CD4-positive, alpha-beta memory T cell (primary cell): ENCODE measurements at regions of chr12 and their contacts with region 1.

Region 1: GRCh38 chr12:48851883-48852733 is at the start of gene DDX23:
- DNase-seq: peak; percentile 89 to 96 (median 92)
- H3K4me3 ChIP-seq: peak within 1 kb of the TSS; percentile 39 to 95
- H3K4me3 Mint-ChIP-seq: peak within 1 kb of the TSS; percentile 91 to 100 (median 98)
- H3K27ac ChIP-seq: peak within 1 kb of the TSS; percentile 91
- H3K27ac Mint-ChIP-seq: peak within 1 kb of the TSS; percentile 92 to 99 (median 99)
- H3K4me1 ChIP-seq: peaks cover 32% of the 10 kb centered on the region
- H3K4me1 Mint-ChIP-seq: peaks cover 28 to 49% (median 40%) of the 10 kb centered on the region in 4 donors
- H3K27me3 ChIP-seq: no peaks in the 10 kb centered on the region
- H3K27me3 Mint-ChIP-seq: no peaks in the 10 kb centered on the region
- total RNA-seq, gene DDX23: 154 to 158 TPM

Region 2: DNA sequence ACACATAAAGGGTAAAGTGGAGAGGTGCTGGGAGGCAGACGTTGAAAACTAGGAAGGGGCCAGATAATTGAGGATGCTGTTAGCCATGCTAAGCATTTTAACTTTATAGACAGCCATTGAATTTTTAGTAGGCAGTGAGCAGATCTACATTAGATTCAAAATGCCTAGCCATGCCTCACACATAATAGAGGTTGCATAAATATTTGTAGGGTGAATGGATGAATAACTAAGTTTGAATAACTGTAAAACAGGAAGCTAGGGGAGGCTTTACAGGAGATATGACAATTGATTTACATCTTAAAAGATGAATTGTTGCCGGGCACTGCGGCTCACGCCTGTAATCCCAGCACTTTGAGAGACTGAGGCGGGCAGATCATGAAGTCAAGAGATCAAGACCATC is 123.3 kb before region 1 on chr12:
- CTCF ChIA-PET with region 1: no interaction called
- POLR2A ChIA-PET with region 1: no interaction called
- intact Hi-C with region 1: no loop called
- DNase-seq: no peak
- H3K4me3 ChIP-seq: no peak overlapping the region
- H3K4me3 Mint-ChIP-seq: no peak overlapping the region
- H3K27ac ChIP-seq: no peak overlapping the region
- H3K27ac Mint-ChIP-seq: no peak overlapping the region
- H3K4me1 ChIP-seq: no peaks in the 10 kb centered on the region
- H3K4me1 Mint-ChIP-seq: no peaks in the 10 kb centered on the region
- H3K27me3 ChIP-seq: no peaks in the 10 kb centered on the region
- H3K27me3 Mint-ChIP-seq: peaks cover 1 to 6% of the 10 kb centered on the region in 2 donors

Region 3: GRCh38 chr12:48838048-48838447 is 14.1 kb before region 1 on chr12:
- CTCF ChIA-PET with region 1: interaction called, 10 read pairs
- POLR2A ChIA-PET with region 1: interaction called, 6 read pairs
- intact Hi-C with region 1: no loop called
- DNase-seq: no peak
- H3K4me3 ChIP-seq: no peak overlapping the region
- H3K4me3 Mint-ChIP-seq: no peak overlapping the region
- H3K27ac ChIP-seq: no peak overlapping the region
- H3K27ac Mint-ChIP-seq: peak overlapping the region in 2 of 7 donors; percentile 21 to 54
- H3K4me1 ChIP-seq: no peaks in the 10 kb centered on the region
- H3K4me1 Mint-ChIP-seq: peaks cover 0 to 2% (median under 1%) of the 10 kb centered on the region in 4 donors
- H3K27me3 ChIP-seq: no peaks in the 10 kb centered on the region
- H3K27me3 Mint-ChIP-seq: no peaks in the 10 kb centered on the region

Region 4: GRCh38 chr12:48903982-48904411 is 51.9 kb after region 1 on chr12:
- CTCF ChIA-PET with region 1: interaction called, 69 read pairs
- POLR2A ChIA-PET with region 1: interaction called, 11 read pairs
- intact Hi-C with region 1: no loop called
- DNase-seq: peak; percentile 81 to 89 (median 82)
- H3K4me3 ChIP-seq: peak overlapping the region in 1 of 2 donors; percentile 36
- H3K4me3 Mint-ChIP-seq: peak overlapping the region; percentile 68 to 86 (median 82)
- H3K27ac ChIP-seq: no peak overlapping the region
- H3K27ac Mint-ChIP-seq: peak overlapping the region in 6 of 7 donors; percentile 76 to 92 (median 89)
- H3K4me1 ChIP-seq: peaks cover 6% of the 10 kb centered on the region
- H3K4me1 Mint-ChIP-seq: peaks cover 2 to 13% (median 7%) of the 10 kb centered on the region in 4 donors
- H3K27me3 ChIP-seq: no peaks in the 10 kb centered on the region
- H3K27me3 Mint-ChIP-seq: peaks cover 0 to 4% of the 10 kb centered on the region in 2 donors

Region 5: DNA sequence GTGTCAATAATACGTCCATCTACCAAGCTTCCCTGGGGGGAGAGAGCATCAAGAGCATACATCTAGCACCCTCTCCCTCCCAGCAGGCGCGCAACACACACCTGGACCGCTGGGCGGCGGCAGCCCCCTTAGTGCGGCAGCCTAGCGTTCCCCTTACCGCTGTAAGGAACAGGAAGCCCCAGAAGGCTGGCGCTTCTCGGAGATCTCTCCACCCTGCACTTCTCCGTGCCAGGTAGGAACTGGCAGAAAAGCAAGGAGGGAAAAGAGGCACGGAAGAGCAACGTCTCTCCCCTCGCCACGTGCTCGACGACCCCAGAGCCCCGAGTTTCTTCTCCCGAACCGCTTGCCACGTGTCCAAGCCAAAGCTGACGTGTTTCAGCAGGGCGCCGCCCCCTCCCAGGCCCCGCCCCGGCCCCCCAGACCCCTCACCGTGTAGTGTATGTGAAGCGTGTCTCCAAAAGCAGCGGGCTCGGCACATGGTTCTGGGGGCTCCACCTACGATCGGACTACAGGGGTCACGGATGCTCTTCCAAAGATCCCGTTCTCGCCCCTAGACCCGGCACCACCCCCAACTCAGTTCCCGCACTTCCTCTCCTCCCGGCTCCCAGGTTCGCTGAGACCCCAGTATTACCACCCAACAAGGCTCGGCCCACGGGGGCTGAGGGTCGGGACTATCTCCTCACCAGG is 72.7 kb after region 1 on chr12:
- CTCF ChIA-PET with region 1: interaction called, 46 read pairs
- POLR2A ChIA-PET with region 1: interaction called, 26 read pairs
- intact Hi-C with region 1: loop called (anchors 1 kb)
- DNase-seq: peak; percentile 79 to 85 (median 81)
- H3K4me3 ChIP-seq: peak overlapping the region; percentile 20 to 97
- H3K4me3 Mint-ChIP-seq: peak overlapping the region; percentile 95 to 98 (median 97)
- H3K27ac ChIP-seq: peak overlapping the region; percentile 95
- H3K27ac Mint-ChIP-seq: peak overlapping the region; percentile 96 to 100 (median 99)
- H3K4me1 ChIP-seq: peaks cover 34% of the 10 kb centered on the region
- H3K4me1 Mint-ChIP-seq: peaks cover 36 to 66% (median 52%) of the 10 kb centered on the region in 4 donors
- H3K27me3 ChIP-seq: no peaks in the 10 kb centered on the region
- H3K27me3 Mint-ChIP-seq: no peaks in the 10 kb centered on the region

Region 6: GRCh38 chr12:48957141-48958048 is 105.3 kb after region 1 on chr12 and contains the start of gene ARF3:
- CTCF ChIA-PET with region 1: interaction called, 16 read pairs
- POLR2A ChIA-PET with region 1: interaction called, 17 read pairs
- intact Hi-C with region 1: no loop called
- DNase-seq: peak; percentile 91 to 93 (median 93)
- H3K4me3 ChIP-seq: peak within 1 kb of the TSS; percentile 45 to 71
- H3K4me3 Mint-ChIP-seq: peak within 1 kb of the TSS; percentile 92 to 98 (median 96)
- H3K27ac ChIP-seq: peak within 1 kb of the TSS; percentile 73
- H3K27ac Mint-ChIP-seq: peak within 1 kb of the TSS; percentile 91 to 97 (median 95)
- H3K4me1 ChIP-seq: peaks cover 34% of the 10 kb centered on the region
- H3K4me1 Mint-ChIP-seq: peaks cover 27 to 54% (median 38%) of the 10 kb centered on the region in 4 donors
- H3K27me3 ChIP-seq: no peaks in the 10 kb centered on the region
- H3K27me3 Mint-ChIP-seq: peaks cover 1 to 2% of the 10 kb centered on the region in 2 donors
- total RNA-seq, gene ARF3: 69.8 to 77.5 TPM

Region 7: GRCh38 chr12:48995061-48995879 is 143.2 kb after region 1 on chr12:
- CTCF ChIA-PET with region 1: interaction called, 55 read pairs
- POLR2A ChIA-PET with region 1: interaction called, 10 read pairs
- intact Hi-C with region 1: loop called (anchors 1 kb)
- DNase-seq: peak; percentile 31 to 53 (median 40)
- H3K4me3 ChIP-seq: no peak overlapping the region
- H3K4me3 Mint-ChIP-seq: peak overlapping the region in 6 of 8 donors; percentile 47 to 92 (median 69)
- H3K27ac ChIP-seq: no peak overlapping the region
- H3K27ac Mint-ChIP-seq: peak overlapping the region in 5 of 7 donors; percentile 51 to 93 (median 89)
- H3K4me1 ChIP-seq: peaks cover 40% of the 10 kb centered on the region
- H3K4me1 Mint-ChIP-seq: peaks cover 13 to 44% (median 25%) of the 10 kb centered on the region in 4 donors
- H3K27me3 ChIP-seq: peaks cover 18% of the 10 kb centered on the region
- H3K27me3 Mint-ChIP-seq: peaks cover 34 to 43% of the 10 kb centered on the region in 2 donors